AG04449 (cell line): ENCODE measurements at regions of chr9 and their contacts with region 1.

Region 1: GRCh38 chr9:15211160-15211814 is 95.7 kb downstream of the TTC39B start:
- DNase-seq: no peak
- H3K4me3 ChIP-seq: no peak overlapping the region
- CTCF ChIP-seq: peak; percentile 81

Region 2: GRCh38 chr9:15068261-15068660 is 143.0 kb before region 1 on chr9:
- CTCF ChIA-PET with region 1: no interaction called
- POLR2A ChIA-PET with region 1: no interaction called
- DNase-seq: no peak
- H3K4me3 ChIP-seq: no peak overlapping the region
- CTCF ChIP-seq: no peak

Region 3: GRCh38 chr9:15422372-15423230 is 211.3 kb after region 1 on chr9 and contains the start of gene SNAPC3:
- CTCF ChIA-PET with region 1: interaction called, 81 read pairs
- POLR2A ChIA-PET with region 1: interaction called, 3 read pairs
- DNase-seq: peak; percentile 44
- H3K4me3 ChIP-seq: peak within 1 kb of the TSS; percentile 83
- CTCF ChIP-seq: no peak